ENCODE measurements at regions of chr9 and their contacts with region 1.

Region 1: GRCh38 chr9:13898957-13899356 is 415.0 kb downstream of the NFIB start:
- DNase-seq: peak; percentile 15
- H3K4me3 ChIP-seq: no peak overlapping the region
- H3K27ac ChIP-seq: peak overlapping the region; percentile 83
- H3K4me1 ChIP-seq: peaks cover 68% of the 10 kb centered on the region
- H3K27me3 ChIP-seq: no peaks in the 10 kb centered on the region
- CTCF ChIP-seq: no peak

Region 2: DNA sequence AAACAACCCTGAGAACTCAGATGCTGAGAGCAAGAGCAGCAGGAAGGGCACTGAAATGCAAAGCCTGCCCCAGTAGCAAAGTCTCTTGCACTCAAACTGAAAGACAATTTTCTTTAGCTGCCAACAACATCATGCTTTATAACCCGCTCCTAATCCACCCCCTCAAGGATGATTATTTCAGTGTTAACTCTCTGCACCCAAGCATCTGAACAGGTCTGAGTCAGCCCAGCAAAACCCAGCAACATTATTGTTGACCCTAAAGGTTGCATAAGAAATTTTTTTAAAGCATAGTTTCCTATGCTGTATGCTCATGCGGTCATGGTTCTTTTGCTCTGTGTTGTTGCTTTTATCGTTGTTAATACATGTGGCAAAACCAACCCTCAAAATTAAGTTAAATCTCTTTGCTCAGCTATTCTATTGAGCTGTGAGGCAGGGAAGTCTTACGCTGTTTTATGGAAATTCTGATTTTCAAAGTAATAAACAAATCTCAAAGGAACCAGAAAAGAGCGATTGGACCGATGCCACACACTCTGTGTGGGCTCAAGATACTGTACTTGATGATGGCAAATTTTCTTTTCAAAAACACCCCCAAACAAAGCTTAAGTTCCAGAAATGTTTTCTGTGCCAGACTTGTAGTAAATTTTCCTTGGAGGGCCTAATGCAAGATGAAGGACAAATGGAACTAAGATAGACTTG is 178.8 kb before region 1 on chr9:
- intact Hi-C with region 1: loop called (anchors 10 kb)
- DNase-seq: no peak
- H3K4me3 ChIP-seq: no peak overlapping the region
- H3K27ac ChIP-seq: no peak overlapping the region
- H3K4me1 ChIP-seq: peaks cover 31% of the 10 kb centered on the region
- H3K27me3 ChIP-seq: no peaks in the 10 kb centered on the region
- CTCF ChIP-seq: no peak

Region 3: GRCh38 chr9:14006386-14007187 is 107.6 kb after region 1 on chr9:
- intact Hi-C with region 1: no loop called
- DNase-seq: no peak
- H3K4me3 ChIP-seq: no peak overlapping the region
- H3K27ac ChIP-seq: no peak overlapping the region
- H3K4me1 ChIP-seq: peaks cover 1% of the 10 kb centered on the region
- H3K27me3 ChIP-seq: no peaks in the 10 kb centered on the region
- CTCF ChIP-seq: no peak

Region 4: GRCh38 chr9:14096258-14096922 is 197.4 kb after region 1 on chr9:
- intact Hi-C with region 1: loop called (anchors 10 kb)
- DNase-seq: no peak
- H3K4me3 ChIP-seq: peak overlapping the region; percentile 52
- H3K27ac ChIP-seq: peak overlapping the region; percentile 88
- H3K4me1 ChIP-seq: peaks cover 80% of the 10 kb centered on the region
- H3K27me3 ChIP-seq: no peaks in the 10 kb centered on the region
- CTCF ChIP-seq: no peak